Dorsolateral prefrontal cortex (tissue), 120 donors: ENCODE measurements at regions of chr3 and their contacts with region 1.

Region 1: DNA sequence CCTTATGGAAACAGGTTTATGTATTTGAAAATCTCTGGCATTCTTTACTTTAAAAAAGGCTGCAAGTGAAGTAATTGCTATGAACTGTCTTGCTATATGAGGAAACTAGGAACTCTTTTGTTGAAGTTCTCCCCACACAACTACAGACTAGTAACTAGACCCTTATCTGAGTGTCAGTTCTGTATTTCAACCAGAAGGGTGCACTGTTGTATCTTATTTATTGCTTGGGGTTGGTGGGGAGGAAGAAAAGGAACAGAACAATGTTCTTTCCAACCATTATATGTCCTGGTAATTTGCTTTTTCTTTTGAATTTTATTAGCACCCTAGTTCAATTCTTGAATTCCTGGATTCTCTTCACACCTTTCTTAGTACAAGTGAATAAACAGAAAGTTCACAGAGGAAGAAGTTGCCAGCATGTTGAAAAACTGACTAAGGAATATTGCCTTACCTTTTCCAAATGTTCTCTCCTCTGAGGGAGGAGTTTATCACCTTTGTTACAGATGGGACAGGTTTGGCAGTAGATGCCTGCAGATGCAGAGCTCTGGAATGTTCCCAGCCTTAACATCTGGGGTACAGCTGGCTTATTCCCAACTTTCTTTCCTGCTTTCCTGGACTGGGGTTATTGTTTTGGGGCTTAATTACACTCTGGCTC is 162.4 kb upstream of the CFAP20DC start:
- DNase-seq: no peak
- H3K4me3 ChIP-seq: no peak overlapping the region
- H3K27ac ChIP-seq: no peak overlapping the region
- H3K27me3 ChIP-seq: peaks cover 0 to 10% (median 0%) of the 10 kb centered on the region in 45 donors
- CTCF ChIP-seq: peak; percentile 59 to 93 (median 84)

Region 2: GRCh38 chr3:59809710-59810444 is 597.6 kb after region 1 on chr3:
- intact Hi-C with region 1: loop called in 1 of 2 experiments (anchors 5 kb)
- DNase-seq: no peak
- H3K4me3 ChIP-seq: no peak overlapping the region
- H3K27ac ChIP-seq: peak overlapping the region in 6 of 59 donors; percentile 22 to 65 (median 35)
- H3K27me3 ChIP-seq: no peaks in the 10 kb centered on the region
- CTCF ChIP-seq: peak; percentile 28 to 75 (median 59)

Region 3: GRCh38 chr3:59857589-59858346 is 645.5 kb after region 1 on chr3:
- intact Hi-C with region 1: loop called in 1 of 2 experiments (anchors 5 kb)
- DNase-seq: peak; percentile 65 to 84 (median 77)
- H3K4me3 ChIP-seq: no peak overlapping the region
- H3K27ac ChIP-seq: no peak overlapping the region
- H3K27me3 ChIP-seq: no peaks in the 10 kb centered on the region
- CTCF ChIP-seq: peak; percentile 78 to 95 (median 90)